ENCODE measurements at regions of chr1 and their contacts with region 1.

Region 1: DNA sequence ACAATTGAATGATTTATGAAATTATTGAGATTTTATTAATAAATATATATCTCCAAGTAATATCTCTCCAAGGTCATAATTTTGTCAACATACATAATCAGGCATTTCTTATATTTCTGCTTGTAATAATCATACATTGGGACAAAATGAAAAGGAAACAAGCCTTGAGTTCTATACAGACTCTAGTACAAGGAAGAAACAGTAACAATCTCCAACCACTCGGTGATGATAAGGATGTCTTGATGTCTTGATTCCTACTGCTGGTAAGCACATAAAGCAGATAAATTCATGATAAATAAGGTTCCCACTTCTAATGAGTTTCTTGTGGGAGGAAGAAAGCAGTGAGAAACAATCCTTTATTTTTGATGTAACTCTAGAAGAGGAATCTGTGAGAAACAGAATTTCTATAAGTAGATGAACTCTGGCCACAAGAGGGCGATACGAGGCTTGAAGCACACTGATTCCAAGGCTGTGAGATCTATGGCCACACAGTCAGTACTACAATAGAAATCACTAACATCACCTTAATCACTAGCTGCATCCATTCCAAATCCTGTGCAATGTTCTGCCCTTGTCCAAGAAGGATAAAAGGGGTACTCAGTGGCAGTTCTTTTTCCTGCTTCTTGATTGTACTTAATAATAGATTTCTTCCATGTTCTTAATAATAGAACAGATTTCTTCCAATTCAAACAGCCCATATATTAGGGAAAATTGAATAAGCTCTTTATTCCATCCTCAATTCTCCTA is 41.4 kb upstream of the LRRC8B start:
- DNase-seq: peak; percentile 93
- H3K4me3 Mint-ChIP-seq: no peak overlapping the region
- H3K27ac Mint-ChIP-seq: no peak overlapping the region
- H3K4me1 Mint-ChIP-seq: peaks cover 12% of the 10 kb centered on the region
- H3K27me3 Mint-ChIP-seq: no peaks in the 10 kb centered on the region

Region 2: DNA sequence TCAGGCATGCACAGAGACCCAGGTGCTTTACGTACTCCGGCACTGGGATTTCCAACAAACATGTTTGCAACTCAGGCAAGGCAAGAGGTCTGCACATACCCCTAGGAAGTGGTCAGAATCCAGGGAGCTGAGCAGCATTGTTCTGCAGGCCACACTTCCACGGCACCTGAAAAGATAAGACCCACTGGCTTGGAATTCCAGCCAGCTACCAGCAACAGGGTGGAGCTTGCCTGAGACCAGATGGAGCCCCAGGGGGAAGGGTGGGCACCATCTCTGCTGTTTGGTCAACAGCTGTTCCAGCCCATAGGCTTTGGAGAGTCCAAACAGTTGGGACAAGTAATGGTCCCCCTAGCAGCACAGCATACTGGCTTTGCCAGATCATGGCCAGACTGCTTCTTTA is 10.2 kb before region 1 on chr1:
- CTCF ChIA-PET with region 1: interaction called, 12 read pairs
- intact Hi-C with region 1: no loop called
- DNase-seq: no peak
- H3K4me3 Mint-ChIP-seq: no peak overlapping the region
- H3K27ac Mint-ChIP-seq: no peak overlapping the region
- H3K4me1 Mint-ChIP-seq: peaks cover 2% of the 10 kb centered on the region
- H3K27me3 Mint-ChIP-seq: no peaks in the 10 kb centered on the region

Region 3: DNA sequence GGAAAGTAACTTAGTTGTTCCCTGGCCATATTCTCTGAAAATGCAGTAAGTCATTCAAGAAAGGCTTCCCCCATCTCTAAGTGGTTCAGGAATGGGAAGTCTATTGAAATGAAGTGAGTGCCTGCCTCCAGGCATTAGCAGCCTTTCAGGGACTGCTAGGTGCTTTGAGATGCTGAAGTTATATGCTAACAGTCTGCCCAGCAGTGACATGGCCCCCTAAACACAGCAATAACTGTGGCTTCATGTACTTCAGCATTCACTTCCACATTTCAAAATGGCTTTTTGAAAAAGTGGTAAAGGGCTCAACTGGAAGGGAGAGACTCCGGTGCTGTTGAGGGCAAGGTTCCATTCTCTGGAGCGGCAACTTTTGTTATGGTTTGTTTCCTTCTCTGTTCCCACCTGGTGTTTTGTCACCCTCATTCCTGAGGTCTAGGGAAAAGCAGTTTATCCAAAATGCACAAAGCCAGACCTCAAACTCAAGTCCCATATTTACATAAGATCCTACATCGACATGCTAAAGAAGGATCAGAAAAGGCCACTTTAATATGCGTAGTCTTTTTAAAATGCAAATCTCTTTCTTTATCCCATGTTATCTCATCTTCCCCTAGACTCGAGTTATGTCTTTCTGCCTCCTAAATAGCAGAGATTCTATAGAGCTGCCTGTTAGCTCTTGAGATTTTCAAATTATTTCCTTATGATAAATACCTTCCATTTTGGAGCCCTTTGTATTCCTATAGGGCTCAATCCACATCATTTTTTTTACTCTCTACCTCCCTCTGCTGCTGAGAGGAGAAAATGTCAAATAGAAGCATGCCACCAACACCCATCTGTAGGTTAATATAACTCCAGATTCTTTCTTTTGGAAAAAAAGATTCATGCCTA is 115.5 kb after region 1 on chr1:
- CTCF ChIA-PET with region 1: interaction called, 109 read pairs
- intact Hi-C with region 1: loop called (anchors 1 kb)
- DNase-seq: no peak
- H3K4me3 Mint-ChIP-seq: no peak overlapping the region
- H3K27ac Mint-ChIP-seq: peak overlapping the region; percentile 24
- H3K4me1 Mint-ChIP-seq: peaks cover 85% of the 10 kb centered on the region
- H3K27me3 Mint-ChIP-seq: no peaks in the 10 kb centered on the region

Region 4: GRCh38 chr1:89615676-89616598 is 132.8 kb after region 1 on chr1:
- CTCF ChIA-PET with region 1: interaction called, 10 read pairs
- intact Hi-C with region 1: no loop called
- DNase-seq: no peak
- H3K4me3 Mint-ChIP-seq: no peak overlapping the region
- H3K27ac Mint-ChIP-seq: no peak overlapping the region
- H3K4me1 Mint-ChIP-seq: peaks cover 65% of the 10 kb centered on the region
- H3K27me3 Mint-ChIP-seq: no peaks in the 10 kb centered on the region

Region 5: GRCh38 chr1:89622895-89623294 is 139.7 kb after region 1 on chr1:
- CTCF ChIA-PET with region 1: interaction called, 12 read pairs
- intact Hi-C with region 1: loop called (anchors 1 kb)
- DNase-seq: no peak
- H3K4me3 Mint-ChIP-seq: no peak overlapping the region
- H3K27ac Mint-ChIP-seq: no peak overlapping the region
- H3K4me1 Mint-ChIP-seq: peaks cover 50% of the 10 kb centered on the region
- H3K27me3 Mint-ChIP-seq: no peaks in the 10 kb centered on the region

Region 6: DNA sequence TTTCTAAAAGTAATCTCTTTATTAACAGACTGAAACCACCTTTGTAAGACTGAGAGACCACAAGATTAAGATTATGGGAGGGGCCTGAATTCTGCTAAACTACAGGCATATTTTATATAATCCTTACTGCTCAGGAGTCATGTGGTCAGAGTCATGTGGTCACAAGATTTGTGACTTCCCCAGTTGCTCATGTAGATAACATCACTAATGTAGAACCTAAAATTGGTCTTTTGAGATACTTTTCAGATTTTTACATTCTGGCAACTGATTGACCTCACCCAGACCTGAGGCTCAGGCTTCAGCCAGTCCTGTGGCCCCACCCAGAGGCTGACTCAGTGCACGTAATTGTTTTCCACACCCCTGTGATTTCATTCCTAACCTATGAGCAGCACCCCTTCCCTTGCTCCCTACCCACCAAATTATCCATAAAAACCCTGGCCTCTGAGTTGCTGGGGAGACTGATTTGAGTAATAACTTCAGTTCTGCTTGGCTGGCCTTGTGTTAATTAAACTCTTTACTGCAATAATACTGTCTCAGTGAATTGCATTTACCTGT is 470.0 kb after region 1 on chr1:
- CTCF ChIA-PET with region 1: no interaction called
- intact Hi-C with region 1: loop called (anchors 1 kb)
- DNase-seq: peak; percentile 66
- H3K4me3 Mint-ChIP-seq: no peak overlapping the region
- H3K27ac Mint-ChIP-seq: no peak overlapping the region
- H3K4me1 Mint-ChIP-seq: peaks cover 18% of the 10 kb centered on the region
- H3K27me3 Mint-ChIP-seq: no peaks in the 10 kb centered on the region

Region 7: GRCh38 chr1:89987170-89987819 is 504.1 kb after region 1 on chr1:
- CTCF ChIA-PET with region 1: interaction called, 10 read pairs
- intact Hi-C with region 1: loop called (anchors 2 kb)
- DNase-seq: peak; percentile 68
- H3K4me3 Mint-ChIP-seq: no peak overlapping the region
- H3K27ac Mint-ChIP-seq: no peak overlapping the region
- H3K4me1 Mint-ChIP-seq: peaks cover 12% of the 10 kb centered on the region
- H3K27me3 Mint-ChIP-seq: no peaks in the 10 kb centered on the region